ENCODE measurements at regions of chr6 and their contacts with region 1.

Region 1: DNA sequence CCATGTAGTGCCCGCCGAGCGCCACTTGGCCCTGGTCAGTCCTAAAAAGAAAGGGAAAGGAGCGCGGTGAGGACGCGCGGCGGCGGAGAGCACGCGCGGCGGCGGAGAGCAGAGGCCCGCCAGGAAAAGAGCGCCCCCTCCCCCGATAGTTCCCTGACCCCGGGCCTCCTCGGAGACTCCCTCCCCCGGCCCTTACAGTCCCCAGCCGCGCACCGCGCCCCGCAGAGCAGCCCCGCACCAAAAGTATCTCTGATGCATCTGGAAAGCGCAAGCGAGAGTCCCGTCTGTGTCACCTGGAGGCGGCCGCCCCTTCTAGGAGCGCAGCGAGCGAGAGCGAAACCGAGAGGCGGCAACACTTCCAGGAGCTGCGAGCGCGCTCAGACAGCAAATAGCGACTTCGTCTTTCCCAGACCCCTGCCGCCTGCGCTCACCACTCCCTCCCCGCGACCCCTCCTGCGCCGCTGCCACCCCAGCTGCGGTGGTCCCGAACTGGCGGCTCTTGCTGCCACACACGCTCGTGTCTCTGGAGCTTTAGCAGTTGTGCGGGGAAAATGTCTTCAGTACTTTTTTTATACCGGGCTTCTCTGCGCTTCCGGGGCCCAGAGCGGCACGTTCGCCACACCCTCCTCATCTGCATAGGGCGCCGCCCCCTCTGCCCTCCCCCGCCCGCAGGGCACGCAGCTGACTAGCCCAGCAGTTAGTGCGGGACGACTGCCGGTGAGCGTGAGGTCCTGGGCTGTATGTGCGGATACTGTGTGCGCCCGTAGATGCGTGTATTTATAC is at the start of gene TENT5A:
- DNase-seq: peak; percentile 94 to 98 (median 97)
- ATAC-seq: peak; percentile 92 to 93
- H3K4me3 ChIP-seq: peak within 1 kb of the TSS; percentile 98
- H3K27ac ChIP-seq: peak within 1 kb of the TSS; percentile 98
- H3K4me1 ChIP-seq: no peaks in the 10 kb centered on the region
- H3K27me3 ChIP-seq: no peaks in the 10 kb centered on the region
- total RNA-seq, gene TENT5A: 31.5 to 38.2 (median 35.5) TPM

Region 2: DNA sequence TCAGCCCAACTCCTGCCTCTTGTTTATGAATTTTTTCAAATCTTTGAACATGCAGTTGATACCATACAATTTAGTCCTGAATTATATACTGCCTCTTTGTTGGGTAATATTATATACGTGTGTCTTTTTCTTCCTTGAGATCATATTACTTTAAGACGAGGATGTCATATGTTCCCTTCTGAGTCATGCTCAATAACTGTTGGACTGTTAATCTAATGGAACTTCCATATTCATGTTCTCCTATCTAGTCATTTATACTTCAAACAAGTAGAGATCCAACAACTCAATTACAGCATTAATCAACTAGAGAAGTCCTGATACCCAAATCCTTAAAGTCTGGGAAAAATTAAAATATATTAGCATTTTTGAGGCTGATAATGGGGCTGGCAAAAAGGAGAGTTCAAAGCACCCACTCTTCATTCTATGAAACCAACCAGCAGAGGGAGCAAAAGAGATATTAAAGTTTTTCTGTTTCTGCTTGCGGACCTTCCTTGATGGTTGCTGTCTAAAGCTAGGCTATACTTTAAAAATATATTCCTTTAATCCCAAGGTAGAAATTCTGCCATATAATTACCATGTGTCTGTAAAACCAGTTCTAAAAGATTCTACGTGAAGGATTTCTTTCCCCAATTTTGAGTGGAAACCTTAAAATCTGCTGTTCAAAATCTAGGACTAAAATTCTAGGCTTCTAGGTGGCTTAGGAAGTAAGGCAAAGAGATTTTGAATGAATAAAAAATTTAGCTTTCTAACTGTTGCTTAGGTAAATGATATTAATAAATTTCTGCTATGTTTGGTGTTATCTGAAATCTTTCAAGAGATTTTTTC is 1147.0 kb before region 1 on chr6:
- intact Hi-C with region 1: loop called in 1 of 4 experiments (anchors 10 kb)
- DNase-seq: no peak
- ATAC-seq: no peak
- H3K4me3 ChIP-seq: no peak overlapping the region
- H3K27ac ChIP-seq: no peak overlapping the region
- H3K4me1 ChIP-seq: peaks cover 3% of the 10 kb centered on the region
- H3K27me3 ChIP-seq: no peaks in the 10 kb centered on the region

Region 3: DNA sequence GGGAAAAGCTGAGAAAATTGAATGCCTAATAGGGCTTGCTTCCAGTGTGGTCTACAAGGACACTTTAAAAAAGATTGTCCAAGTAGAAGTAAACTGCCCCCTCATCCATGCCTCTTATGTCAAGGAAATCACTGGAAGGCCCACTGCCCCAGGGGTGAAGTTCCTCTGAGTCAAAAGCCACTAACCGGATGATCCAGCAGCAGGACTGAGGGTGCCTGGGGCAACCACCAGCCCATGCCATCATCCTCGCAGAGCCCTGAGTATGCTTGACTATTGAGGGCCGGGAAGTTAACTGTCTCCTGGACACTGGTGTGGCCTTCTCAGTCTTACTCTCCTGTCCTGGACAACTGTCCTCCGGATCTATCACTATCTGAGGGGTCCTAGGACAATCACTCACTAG is 411.4 kb before region 1 on chr6:
- intact Hi-C with region 1: no loop called
- DNase-seq: no peak
- ATAC-seq: no peak
- H3K4me3 ChIP-seq: no peak overlapping the region
- H3K27ac ChIP-seq: no peak overlapping the region
- H3K4me1 ChIP-seq: no peaks in the 10 kb centered on the region
- H3K27me3 ChIP-seq: no peaks in the 10 kb centered on the region

Region 4: DNA sequence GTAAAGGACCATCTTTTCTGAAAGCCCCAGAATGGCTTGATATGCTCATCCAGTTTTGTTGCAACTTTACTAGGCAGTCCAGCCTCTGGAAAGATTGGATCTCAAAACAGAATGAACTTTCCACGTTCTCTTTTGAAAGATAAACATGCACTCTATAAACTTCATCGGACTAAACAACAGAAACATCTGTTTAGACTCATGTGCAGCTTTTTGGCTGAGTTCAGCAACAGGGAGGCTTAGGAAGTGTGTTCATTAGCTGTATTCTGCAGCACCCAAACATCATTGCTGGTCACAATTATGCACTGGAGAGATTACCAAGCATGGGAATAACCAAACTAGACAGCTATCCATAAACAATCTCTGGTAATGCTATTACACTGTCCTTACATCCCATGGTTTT is 180.3 kb before region 1 on chr6:
- intact Hi-C with region 1: loop called in 1 of 4 experiments (anchors 10 kb)
- DNase-seq: no peak
- ATAC-seq: peak in 1 of 2 donors; percentile 29
- H3K4me3 ChIP-seq: no peak overlapping the region
- H3K27ac ChIP-seq: no peak overlapping the region
- H3K4me1 ChIP-seq: no peaks in the 10 kb centered on the region
- H3K27me3 ChIP-seq: no peaks in the 10 kb centered on the region

Region 5: GRCh38 chr6:81881660-81882059 is 129.3 kb after region 1 on chr6:
- intact Hi-C with region 1: no loop called
- DNase-seq: no peak
- ATAC-seq: no peak
- H3K4me3 ChIP-seq: no peak overlapping the region
- H3K27ac ChIP-seq: no peak overlapping the region
- H3K4me1 ChIP-seq: no peaks in the 10 kb centered on the region
- H3K27me3 ChIP-seq: no peaks in the 10 kb centered on the region

Region 6: GRCh38 chr6:81894788-81895271 is 142.5 kb after region 1 on chr6:
- intact Hi-C with region 1: loop called in 3 of 4 experiments (anchors 5 to 10 kb)
- DNase-seq: peak; percentile 72 to 88 (median 85)
- ATAC-seq: peak; percentile 95
- H3K4me3 ChIP-seq: no peak overlapping the region
- H3K27ac ChIP-seq: peak overlapping the region; percentile 97
- H3K4me1 ChIP-seq: peaks cover 14% of the 10 kb centered on the region
- H3K27me3 ChIP-seq: no peaks in the 10 kb centered on the region

Region 7: DNA sequence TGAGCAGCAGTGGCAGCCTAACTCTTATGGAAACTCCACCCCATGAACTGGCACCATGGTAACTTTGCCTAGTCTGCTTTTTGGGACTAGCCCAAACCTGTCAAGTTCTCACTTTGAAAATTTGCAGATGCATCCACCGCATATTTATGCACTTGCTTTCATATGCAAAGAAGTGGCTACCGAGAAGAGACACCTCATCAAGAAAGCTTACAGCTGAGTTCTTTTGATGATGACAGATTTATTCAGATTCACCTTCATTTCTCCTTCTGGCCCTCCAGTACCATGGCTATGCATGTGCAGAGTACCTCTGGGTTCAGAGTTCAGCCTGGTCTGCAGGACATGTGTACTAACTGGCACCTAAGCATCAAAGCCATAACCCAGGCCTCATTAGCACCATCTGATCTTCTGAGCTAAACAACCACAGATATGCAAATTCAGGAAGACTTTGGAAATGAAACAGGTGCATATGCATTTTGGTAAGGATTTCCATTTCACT is 154.4 kb after region 1 on chr6:
- intact Hi-C with region 1: loop called in 1 of 4 experiments (anchors 10 kb)
- DNase-seq: no peak
- ATAC-seq: peak in 1 of 2 donors; percentile 37
- H3K4me3 ChIP-seq: no peak overlapping the region
- H3K27ac ChIP-seq: no peak overlapping the region
- H3K4me1 ChIP-seq: peaks cover 9% of the 10 kb centered on the region
- H3K27me3 ChIP-seq: no peaks in the 10 kb centered on the region

Region 8: DNA sequence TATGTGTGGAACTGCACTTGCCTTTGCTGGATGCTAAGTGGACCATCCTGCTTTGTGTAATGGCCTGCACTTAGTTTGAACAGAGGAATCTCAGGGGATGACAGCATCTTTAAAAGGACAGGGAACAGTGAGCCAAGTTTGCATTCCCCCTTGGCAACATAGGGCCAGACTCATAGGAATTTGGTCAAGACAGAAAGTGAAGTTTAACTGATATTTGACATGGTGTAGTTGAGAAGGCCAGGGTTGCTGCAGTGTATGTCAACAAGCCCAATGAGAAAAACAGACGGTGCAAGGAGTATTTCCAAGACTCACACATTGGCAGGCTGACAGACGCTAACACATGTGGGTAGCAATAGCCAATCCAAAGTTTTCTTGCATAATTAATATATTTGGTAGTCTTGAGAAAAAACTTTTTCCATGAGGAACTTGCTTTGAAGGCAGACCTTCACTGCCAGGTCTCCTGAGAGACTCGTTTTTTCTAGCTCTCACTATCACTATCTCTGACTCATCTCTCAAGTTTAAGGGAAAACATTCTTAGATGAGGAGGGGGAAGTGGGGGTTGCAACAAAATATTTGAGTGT is 281.4 kb after region 1 on chr6:
- intact Hi-C with region 1: loop called in 1 of 4 experiments (anchors 10 kb)
- DNase-seq: peak; percentile 50 to 74 (median 66)
- ATAC-seq: peak; percentile 67 to 87
- H3K4me3 ChIP-seq: no peak overlapping the region
- H3K27ac ChIP-seq: peak overlapping the region; percentile 45
- H3K4me1 ChIP-seq: peaks cover 6% of the 10 kb centered on the region
- H3K27me3 ChIP-seq: no peaks in the 10 kb centered on the region